Heart left ventricle (tissue), 16 donors: ENCODE measurements at regions of chr12 and their contacts with region 1.

Region 1: DNA sequence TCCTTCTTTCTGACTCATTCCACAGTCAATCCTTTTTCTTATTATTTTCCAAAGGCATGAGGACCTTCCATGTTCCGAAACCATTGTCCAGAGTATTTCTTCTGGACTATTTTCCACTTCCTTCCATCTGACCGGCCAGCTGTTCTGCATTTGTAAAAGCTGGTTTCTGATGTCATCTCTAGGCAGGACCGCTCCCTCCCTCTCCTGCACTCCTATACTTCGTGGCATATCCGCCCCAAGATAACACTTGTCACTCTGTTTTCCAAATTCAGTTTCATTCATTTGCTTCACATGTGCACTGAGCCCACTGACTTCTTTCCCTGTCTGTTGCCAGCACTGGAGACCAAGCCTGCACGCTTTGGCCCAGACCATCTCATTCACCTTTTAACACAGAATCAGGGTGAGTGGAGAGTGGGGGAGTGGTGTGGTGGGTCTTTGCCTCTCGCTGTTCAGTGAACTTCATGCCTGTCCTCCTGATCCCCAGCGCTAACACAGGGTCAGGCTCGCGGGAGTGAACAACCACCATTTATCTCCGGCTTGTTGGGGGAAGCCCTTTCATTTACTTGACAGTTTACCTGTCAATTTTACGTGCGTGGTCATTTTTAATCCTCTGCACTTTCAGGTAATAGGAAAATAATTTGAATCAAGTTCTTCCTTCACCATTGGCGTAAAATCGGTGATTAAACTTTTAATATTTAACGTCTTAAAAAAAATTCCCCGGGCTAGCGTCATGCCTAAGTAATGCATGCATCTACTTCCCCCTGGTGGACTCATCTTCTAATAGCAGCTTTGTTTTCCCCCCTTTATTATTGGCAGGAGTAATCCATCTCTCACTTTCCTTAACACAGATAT is 52.5 kb downstream of the C12orf75 start:
- DNase-seq: peak in 1 of 5 donors; percentile 21
- ATAC-seq: peak in 3 of 4 donors; percentile 62 to 86 (median 77)
- H3K4me3 ChIP-seq: peak overlapping the region in 9 of 12 donors; percentile 5 to 49 (median 30)
- H3K27ac ChIP-seq: no peak overlapping the region
- H3K4me1 ChIP-seq: peaks cover 0 to 6% (median 0%) of the 10 kb centered on the region in 12 donors
- H3K27me3 ChIP-seq: peaks cover 0 to 4% (median 0%) of the 10 kb centered on the region in 9 donors
- CTCF ChIP-seq: peak; percentile 67 to 88 (median 78)
- POLR2A ChIP-seq: no peak

Region 2: DNA sequence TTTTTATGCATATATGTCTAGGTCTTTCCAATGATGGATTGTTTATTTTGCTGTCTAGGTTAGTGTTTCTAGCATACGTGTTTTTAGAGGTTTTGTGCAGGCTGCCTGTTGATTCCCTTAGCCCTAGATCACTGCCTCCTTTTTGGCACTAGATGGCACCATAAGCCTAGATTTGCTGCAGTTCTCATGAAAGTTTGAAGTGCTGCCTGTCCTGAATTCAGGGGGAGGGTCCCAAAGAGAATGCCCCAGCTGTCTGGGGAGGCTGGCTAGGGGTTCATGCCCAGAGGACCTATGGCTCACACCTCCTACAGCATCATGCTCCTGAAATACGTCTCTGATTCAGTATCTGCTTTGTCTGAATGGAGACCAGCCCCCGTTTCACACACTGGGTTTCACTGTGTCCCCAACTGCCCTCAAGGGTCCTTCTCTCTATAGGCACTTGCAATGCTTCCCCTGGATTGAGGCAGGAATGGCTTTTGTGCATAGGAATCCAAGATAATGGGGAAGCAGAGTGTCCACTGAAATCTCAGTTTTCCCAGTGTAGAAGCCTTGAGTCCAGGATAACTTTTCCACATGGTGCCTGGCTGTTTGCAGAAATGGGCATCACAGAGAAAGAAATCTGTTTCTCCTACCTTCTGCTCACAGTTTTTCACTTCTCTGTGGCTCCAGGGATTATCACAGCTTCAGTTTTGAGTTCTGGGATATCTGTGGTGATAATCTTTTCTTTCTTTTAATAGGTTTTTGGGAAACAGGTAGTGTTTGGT is 1181.6 kb before region 1 on chr12:
- intact Hi-C with region 1: loop called in 1 of 10 experiments (anchors 10 kb)
- DNase-seq: peak in 1 of 5 donors; percentile 14
- ATAC-seq: peak in 3 of 4 donors; percentile 72 to 86 (median 72)
- H3K4me3 ChIP-seq: no peak overlapping the region
- H3K27ac ChIP-seq: no peak overlapping the region
- H3K4me1 ChIP-seq: peaks cover 0 to 6% (median 0%) of the 10 kb centered on the region in 12 donors
- H3K27me3 ChIP-seq: no peaks in the 10 kb centered on the region
- CTCF ChIP-seq: peak; percentile 58 to 92 (median 82)
- POLR2A ChIP-seq: no peak

Region 3: GRCh38 chr12:105171691-105172436 is 211.1 kb before region 1 on chr12:
- intact Hi-C with region 1: loop called in 2 of 10 experiments (anchors 2 to 10 kb)
- DNase-seq: no peak
- ATAC-seq: no peak
- H3K4me3 ChIP-seq: no peak overlapping the region
- H3K27ac ChIP-seq: no peak overlapping the region
- H3K4me1 ChIP-seq: no peaks in the 10 kb centered on the region
- H3K27me3 ChIP-seq: no peaks in the 10 kb centered on the region
- CTCF ChIP-seq: no peak
- POLR2A ChIP-seq: no peak

Region 4: DNA sequence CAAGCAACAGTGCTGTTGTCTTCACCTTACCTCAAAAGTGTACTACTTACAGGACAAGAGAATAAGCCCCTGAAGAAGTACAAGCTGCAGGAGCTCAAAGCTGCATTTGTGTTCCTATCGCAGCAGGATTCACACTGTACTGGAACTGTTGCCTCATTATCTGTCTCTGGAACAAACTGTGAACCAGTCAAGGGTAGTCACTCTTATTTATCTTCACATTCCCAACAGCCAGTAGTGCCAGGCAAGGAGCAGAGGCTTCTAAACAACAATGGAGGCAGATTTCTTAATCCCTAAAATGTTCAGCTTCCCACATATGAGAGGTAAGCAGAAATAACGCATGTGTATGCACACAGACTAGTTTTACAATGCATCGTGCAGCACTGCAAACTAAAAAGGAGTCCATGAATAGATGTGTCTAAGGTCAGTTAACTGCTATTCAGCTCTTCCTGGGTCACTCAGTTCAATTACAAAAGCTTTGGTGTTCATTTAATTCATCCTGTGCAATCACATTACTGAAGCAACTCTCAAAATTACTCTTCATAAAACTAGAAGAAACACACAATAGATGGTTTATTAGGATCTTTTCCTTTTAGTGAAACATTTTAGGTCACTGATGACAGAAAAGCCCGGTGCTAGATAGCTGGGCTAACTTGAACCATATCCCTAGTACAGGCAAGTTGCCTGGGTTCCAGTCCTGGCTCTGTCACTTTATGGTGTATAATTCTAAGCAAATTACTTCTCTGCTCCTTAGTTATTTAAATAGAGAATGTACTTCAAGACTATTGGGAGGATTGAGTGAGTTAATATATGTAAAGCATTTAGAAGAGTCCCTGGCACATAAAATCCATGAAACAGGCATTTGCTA is 149.7 kb before region 1 on chr12:
- intact Hi-C with region 1: loop called in 1 of 10 experiments (anchors 2 kb)
- DNase-seq: no peak
- ATAC-seq: peak; percentile 39 to 72 (median 48)
- H3K4me3 ChIP-seq: peak overlapping the region in 8 of 12 donors; percentile 5 to 97 (median 71)
- H3K27ac ChIP-seq: peak overlapping the region; percentile 6 to 95 (median 53)
- H3K4me1 ChIP-seq: peaks cover 9 to 74% (median 47%) of the 10 kb centered on the region in 12 donors
- H3K27me3 ChIP-seq: no peaks in the 10 kb centered on the region
- CTCF ChIP-seq: no peak
- POLR2A ChIP-seq: no peak

Region 5: GRCh38 chr12:105279460-105280056 is 103.4 kb before region 1 on chr12:
- intact Hi-C with region 1: loop called (anchors 2 to 10 kb)
- DNase-seq: peak in 2 of 5 donors; percentile 11 to 21
- ATAC-seq: peak in 3 of 4 donors; percentile 44 to 55 (median 50)
- H3K4me3 ChIP-seq: no peak overlapping the region
- H3K27ac ChIP-seq: no peak overlapping the region
- H3K4me1 ChIP-seq: no peaks in the 10 kb centered on the region
- H3K27me3 ChIP-seq: peaks cover 0 to 6% (median 0%) of the 10 kb centered on the region in 9 donors
- CTCF ChIP-seq: peak; percentile 33 to 71 (median 63)
- POLR2A ChIP-seq: no peak